ENCODE measurements at regions of chr17 and their contacts with region 1.

Region 1: DNA sequence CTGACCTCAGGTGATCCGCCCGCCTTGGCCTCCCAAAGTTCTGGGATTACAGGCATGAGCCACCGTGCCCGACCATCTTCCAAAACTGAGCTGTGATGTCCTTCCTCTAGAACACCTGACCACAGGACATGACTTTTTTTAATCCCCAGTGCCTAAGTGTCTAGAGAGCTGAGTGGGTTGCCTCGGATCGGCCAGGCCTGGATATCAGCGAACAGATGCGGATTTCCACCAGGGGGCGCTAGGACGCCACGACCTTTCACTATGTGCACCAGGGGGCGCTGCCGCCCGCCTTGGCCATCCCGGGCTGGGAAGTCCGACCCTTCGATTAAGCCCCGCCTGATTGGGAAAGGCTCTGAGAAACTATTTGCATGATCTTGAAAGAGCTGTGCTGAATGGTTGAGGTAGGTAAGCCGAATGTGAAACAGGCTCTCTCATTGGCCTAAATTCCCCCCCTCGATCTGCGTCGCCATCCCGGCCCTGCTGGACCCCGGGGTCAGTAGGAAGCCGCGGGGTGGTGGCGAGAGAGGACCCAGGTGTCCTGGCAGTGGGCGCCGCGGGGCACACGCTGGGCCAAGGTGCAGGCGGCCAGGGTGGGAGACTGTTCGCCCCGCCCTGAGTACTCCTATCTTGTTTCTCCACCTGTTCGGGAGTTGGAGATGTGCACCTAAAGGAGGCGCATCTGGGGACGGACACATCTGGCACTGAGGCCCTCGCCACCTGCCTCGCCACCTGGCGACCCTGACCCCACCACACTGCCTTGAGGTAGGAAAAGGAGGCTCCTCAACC is at the start of gene ACBD4:
- DNase-seq: peak; percentile 98
- H3K4me3 Mint-ChIP-seq: peak within 1 kb of the TSS; percentile 87
- H3K27ac Mint-ChIP-seq: peak within 1 kb of the TSS; percentile 66
- H3K4me1 Mint-ChIP-seq: peaks cover 20% of the 10 kb centered on the region
- H3K27me3 Mint-ChIP-seq: peaks cover 9% of the 10 kb centered on the region
- total RNA-seq, gene ACBD4: 15.0 to 17.8 TPM

Region 2: DNA sequence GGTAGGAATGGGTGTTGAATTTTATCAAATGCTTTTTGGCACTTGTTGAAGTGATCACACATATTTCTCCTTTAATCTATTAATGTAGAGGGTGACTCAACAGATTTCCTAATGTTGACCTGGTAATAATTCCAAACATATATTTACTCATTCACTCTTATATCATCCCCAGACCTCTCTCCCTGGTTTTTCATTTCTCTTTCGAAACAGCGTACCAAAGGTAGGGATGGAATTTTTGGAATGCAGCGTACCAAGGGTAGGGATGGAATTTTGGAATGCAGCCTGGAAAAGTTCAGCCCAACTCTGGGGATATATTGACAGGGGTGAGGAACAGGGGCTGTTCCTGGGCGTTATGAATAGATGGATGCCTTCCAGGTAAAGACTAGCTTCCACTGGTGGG is 195.1 kb before region 1 on chr17:
- CTCF ChIA-PET with region 1: no interaction called
- POLR2A ChIA-PET with region 1: no interaction called
- DNase-seq: no peak
- H3K4me3 Mint-ChIP-seq: no peak overlapping the region
- H3K27ac Mint-ChIP-seq: no peak overlapping the region
- H3K4me1 Mint-ChIP-seq: peaks cover 51% of the 10 kb centered on the region
- H3K27me3 Mint-ChIP-seq: no peaks in the 10 kb centered on the region

Region 3: DNA sequence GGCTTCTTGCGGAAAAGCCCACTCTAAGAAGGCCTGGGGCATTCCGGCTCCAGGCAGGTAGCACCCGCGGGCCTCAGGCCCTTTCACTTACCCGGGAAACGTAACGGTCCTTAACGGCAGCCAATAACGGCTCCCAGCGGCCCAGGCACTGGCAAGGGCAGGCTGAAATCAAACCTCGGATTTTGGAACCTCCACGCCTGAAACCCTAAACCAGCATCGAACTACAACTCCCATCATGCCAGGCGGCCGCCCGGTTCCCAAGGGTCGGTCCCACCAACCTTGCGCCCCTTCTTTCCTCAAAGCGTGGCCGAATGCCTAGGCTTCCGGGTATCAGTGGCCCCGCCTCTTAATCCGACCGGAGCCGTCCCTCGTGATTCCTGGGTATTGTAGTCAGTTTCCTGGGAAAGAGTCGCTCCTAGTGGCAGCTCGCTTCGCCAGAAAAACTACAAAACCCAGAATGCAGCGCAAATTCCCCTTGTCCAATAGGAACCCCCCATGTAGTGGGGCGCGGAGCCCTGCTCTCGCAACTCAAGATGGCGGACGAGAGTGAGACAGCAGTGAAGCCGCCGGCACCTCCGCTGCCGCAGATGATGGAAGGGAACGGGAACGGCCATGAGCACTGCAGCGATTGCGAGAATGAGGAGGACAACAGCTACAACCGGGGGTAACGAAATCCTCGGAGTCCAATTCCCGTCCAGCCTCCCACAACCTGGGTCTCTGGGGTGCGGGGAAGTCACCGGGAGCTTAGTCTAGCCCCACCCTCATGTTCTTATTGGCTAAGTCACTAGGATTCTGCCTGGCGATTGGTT is 74.4 kb before region 1 on chr17 and contains the start of gene NMT1:
- CTCF ChIA-PET with region 1: interaction called, 23 read pairs
- POLR2A ChIA-PET with region 1: interaction called, 7 read pairs
- DNase-seq: peak; percentile 98
- H3K4me3 Mint-ChIP-seq: peak within 1 kb of the TSS; percentile 89
- H3K27ac Mint-ChIP-seq: peak within 1 kb of the TSS; percentile 96
- H3K4me1 Mint-ChIP-seq: peaks cover 42% of the 10 kb centered on the region
- H3K27me3 Mint-ChIP-seq: no peaks in the 10 kb centered on the region
- total RNA-seq, gene NMT1: 114 TPM

Region 4: DNA sequence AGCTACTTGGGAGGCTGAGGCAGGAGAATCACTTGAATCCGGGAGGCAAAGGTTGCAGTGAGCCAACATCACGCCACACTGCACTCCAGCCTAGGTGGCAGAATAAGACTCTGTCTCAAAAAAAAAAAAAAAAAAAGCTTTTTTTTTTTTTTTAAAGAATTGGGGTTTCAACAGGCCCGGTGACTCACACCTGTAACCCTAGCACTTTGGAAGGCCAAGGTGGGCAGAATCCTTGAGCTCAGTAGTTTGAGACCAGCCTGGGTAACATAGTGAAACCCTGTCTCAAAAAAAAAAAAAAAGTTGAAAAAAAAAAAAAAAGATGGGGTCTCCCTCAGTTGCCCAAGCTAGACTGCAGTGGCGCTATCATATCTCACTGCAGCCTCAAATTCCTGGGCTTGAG is 19.6 kb after region 1 on chr17:
- CTCF ChIA-PET with region 1: interaction called, 347 read pairs
- POLR2A ChIA-PET with region 1: interaction called, 106 read pairs
- DNase-seq: no peak
- H3K4me3 Mint-ChIP-seq: no peak overlapping the region
- H3K27ac Mint-ChIP-seq: no peak overlapping the region
- H3K4me1 Mint-ChIP-seq: peaks cover 44% of the 10 kb centered on the region
- H3K27me3 Mint-ChIP-seq: no peaks in the 10 kb centered on the region

Region 5: DNA sequence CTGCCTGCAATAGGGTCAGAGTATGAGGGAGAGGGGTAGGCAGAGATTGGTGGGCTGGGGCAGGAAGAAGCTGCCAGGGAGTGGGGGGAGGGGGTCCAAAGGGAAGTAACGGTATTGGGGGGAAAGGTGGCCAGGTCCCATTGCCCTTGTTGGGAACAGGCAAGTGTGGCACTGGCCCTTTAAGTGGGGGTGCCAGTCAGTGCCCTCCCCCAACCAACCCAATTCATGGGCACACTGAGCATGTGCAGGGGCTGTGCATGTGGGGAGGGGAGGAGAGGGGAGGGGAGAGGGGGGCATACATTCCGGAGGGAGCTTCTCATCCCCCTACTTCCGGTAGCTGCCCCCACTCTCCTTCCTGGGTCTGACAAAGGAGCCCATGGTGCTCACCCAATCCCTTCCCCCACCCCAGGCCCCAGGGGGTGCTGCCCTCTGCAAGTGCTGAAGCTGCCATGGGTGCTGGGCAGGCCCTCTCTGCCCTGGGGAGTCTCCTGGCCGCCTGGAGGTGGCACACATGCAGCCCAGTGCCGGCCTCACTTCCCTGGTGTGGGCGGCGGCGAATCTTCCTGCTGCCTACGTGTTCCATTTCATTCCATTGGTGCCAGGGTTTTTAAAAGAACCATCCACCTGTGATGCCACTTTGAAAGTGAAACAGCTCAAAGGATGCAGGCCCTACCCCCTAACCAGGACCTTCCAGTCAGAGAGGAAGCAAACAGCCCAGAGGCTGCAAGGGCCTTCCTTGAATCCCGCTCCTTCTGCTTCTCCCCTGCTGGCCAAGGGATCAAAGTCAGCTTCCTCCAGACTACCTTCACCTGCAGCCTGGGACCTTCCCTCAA is 37.3 kb after region 1 on chr17:
- CTCF ChIA-PET with region 1: interaction called, 22 read pairs
- POLR2A ChIA-PET with region 1: no interaction called
- DNase-seq: peak; percentile 40
- H3K4me3 Mint-ChIP-seq: peak overlapping the region; percentile 51
- H3K27ac Mint-ChIP-seq: peak overlapping the region; percentile 81
- H3K4me1 Mint-ChIP-seq: peaks cover 25% of the 10 kb centered on the region
- H3K27me3 Mint-ChIP-seq: no peaks in the 10 kb centered on the region

Region 6: DNA sequence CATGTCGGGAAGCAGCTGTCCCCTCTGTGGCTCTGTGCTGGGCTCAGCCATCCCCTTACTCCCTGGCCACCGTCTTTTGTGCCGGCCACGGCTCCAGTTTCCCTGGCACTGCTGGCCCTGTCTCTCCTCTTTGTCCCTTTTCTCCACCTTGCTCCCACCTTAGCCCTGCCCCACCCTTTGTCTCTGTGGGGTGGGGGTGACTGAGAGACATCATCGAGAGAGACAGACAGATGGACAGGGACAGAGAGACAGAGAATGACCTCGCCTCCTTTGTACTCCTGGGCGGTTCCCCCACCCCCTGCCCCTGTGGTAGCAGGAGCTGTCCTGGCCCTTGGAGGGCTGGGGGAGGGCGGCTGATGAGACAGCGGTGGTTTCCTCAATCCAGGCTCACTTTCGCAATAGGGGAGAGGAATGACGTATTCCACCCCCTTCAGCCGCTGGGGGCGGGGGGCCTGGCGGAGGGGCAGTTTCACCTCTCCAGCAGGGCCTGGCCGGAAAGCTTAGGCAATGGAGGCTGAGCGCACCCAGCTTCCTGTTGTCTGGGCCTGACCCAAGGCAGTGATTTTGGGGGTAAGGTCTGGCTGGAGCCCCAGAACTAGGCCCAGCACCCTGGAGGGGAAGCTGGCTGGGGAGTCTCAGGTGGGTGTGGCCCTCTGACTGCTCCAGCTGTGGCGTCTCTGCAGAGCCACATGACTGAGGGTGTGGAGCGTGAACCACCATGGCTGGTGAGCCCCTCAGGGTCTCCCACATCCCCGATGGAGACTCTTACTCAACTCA is 93.6 kb after region 1 on chr17:
- CTCF ChIA-PET with region 1: interaction called, 10 read pairs
- POLR2A ChIA-PET with region 1: interaction called, 4 read pairs
- DNase-seq: peak; percentile 85
- H3K4me3 Mint-ChIP-seq: peak overlapping the region; percentile 100
- H3K27ac Mint-ChIP-seq: peak overlapping the region; percentile 99
- H3K4me1 Mint-ChIP-seq: peaks cover 88% of the 10 kb centered on the region
- H3K27me3 Mint-ChIP-seq: no peaks in the 10 kb centered on the region